A673 (cell line): ENCODE measurements at regions of chr3 and their contacts with region 1.

Region 1: GRCh38 chr3:157572559-157573270 is 69.5 kb upstream of the VEPH1 start:
- DNase-seq: peak; percentile 71
- H3K4me3 ChIP-seq: no peak overlapping the region
- H3K27ac ChIP-seq: no peak overlapping the region
- H3K4me1 ChIP-seq: no peaks in the 10 kb centered on the region
- H3K27me3 ChIP-seq: peaks cover 12% of the 10 kb centered on the region
- CTCF ChIP-seq: peak; percentile 82

Region 2: DNA sequence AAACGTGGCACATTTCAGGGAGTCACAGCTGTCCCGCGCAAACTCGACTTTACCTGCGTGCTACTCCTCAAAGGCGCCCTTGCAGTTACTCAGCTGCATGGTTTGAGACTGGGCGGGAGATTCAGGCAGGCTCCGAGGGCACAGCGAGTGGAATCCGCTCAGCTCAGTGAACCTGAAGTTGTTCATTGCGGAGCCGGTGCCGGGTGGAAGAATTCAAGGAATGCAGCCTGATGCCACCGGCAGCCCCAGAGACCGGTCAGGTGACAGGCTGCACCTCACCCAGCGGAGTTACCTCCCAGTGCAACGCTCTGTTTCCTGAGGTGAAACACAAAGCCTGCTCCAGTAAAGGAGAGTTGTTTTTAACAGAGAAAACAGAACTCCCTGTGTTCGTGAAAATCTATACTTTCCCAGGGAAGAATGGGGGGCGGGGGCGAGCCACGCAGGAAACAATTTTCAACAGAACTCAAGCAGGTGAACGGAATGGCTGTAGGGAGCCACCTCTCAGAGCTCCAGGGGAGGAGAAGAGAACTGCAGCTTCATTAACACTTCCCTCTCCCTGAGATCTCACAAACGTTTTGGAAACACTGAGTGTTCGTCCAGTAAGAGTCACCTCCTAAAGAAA is 73.3 kb before region 1 on chr3:
- CTCF ChIA-PET with region 1: no interaction called
- POLR2A ChIA-PET with region 1: no interaction called
- intact Hi-C with region 1: no loop called
- DNase-seq: no peak
- H3K4me3 ChIP-seq: no peak overlapping the region
- H3K27ac ChIP-seq: no peak overlapping the region
- H3K4me1 ChIP-seq: no peaks in the 10 kb centered on the region
- H3K27me3 ChIP-seq: peaks cover 8% of the 10 kb centered on the region
- CTCF ChIP-seq: no peak

Region 3: DNA sequence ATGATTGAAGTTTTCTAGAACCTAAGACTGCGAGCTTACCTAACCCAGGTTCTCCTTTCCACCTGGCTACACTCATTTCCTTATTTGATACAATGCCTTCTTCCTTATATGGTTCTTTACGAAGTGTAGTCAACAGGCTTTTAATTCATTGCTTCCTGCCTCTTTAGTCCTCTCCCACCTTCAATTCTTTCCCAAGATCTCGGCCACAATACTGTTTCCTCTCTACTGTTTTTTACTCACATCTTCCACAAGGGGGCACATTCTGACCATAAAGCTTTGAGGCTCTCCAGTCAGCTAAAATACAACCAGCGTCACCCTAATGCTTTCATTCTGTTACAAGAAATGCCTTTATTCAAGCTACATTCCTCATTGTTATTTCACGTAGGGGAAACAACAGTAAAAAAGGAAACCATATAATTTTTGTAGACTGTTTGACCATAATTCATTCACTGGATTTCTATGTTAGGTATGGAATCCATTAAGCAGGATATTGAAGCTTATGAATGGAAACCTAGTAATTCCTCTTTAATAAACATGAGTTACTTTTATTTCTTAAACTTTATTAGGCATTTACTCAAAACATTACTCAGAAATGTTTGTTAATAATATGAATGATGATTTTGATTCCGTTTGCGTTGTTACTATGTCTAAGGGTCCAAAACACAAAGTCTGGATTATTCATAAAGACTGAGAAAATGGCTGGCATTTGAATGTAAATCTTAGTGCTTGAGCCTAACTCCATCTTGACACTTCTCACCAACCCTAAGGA is 40.0 kb before region 1 on chr3:
- CTCF ChIA-PET with region 1: interaction called, 54 read pairs
- POLR2A ChIA-PET with region 1: no interaction called
- intact Hi-C with region 1: loop called (anchors 1 kb)
- DNase-seq: peak; percentile 87
- H3K4me3 ChIP-seq: no peak overlapping the region
- H3K27ac ChIP-seq: no peak overlapping the region
- H3K4me1 ChIP-seq: no peaks in the 10 kb centered on the region
- H3K27me3 ChIP-seq: peaks cover under 1% of the 10 kb centered on the region
- CTCF ChIP-seq: peak; percentile 83

Region 4: DNA sequence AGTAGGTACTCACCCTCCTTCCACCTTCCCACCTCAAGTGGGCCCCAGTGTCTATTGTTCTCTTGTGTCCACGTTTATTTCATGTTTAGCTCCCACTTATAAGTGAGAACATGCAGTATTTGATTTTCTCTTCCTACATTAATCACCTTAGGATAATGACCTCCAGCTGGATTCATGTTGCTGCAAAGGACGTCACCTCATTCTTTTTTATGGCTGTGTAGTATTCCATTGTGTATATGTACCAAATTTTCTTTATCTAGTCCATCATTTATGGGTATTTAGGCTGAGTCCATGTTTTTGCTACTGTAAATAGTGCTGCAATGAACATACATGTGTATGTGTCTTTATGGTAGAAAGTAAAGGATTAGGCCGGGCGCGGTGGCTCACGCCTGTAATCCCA is 992.4 kb after region 1 on chr3:
- CTCF ChIA-PET with region 1: interaction called, 16 read pairs
- POLR2A ChIA-PET with region 1: no interaction called
- intact Hi-C with region 1: no loop called
- DNase-seq: no peak
- H3K4me3 ChIP-seq: no peak overlapping the region
- H3K27ac ChIP-seq: no peak overlapping the region
- H3K4me1 ChIP-seq: no peaks in the 10 kb centered on the region
- H3K27me3 ChIP-seq: no peaks in the 10 kb centered on the region
- CTCF ChIP-seq: no peak